Caco-2 (cell line): ENCODE measurements at regions of chr12 and their contacts with region 1.

Region 1: DNA sequence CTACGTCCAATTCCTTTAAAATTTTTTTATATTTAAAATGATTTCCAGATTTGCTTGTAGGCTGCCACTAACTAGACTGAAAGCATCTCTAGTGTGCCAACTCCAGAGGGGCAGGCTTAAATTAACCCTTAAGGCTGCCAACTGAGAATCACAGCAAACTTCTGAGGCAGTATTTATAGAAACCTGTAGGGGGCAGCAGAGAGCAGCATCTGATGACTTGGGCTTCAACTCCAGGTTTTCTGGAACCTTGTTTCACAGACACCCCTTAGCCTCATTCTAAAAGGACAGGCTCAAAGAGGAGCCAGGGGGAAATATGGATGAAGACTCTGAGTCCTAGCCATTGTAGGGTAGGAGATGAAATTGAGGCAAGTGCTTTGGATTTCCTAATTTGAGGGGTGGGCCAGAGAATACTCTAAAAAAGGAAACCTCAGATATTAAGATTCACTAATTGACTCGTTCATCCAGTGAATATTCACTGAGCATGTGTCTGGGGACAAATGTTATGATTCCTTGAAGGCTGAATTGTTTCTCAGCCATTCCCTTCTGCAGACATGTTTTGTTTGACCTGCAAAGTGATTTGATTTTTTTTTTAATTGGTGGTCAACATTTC is 63.3 kb upstream of the HSPB8 start:
- DNase-seq: peak in 1 of 2 experiments; percentile 67
- H3K4me3 ChIP-seq: no peak overlapping the region
- H3K4me3 Mint-ChIP-seq: no peak overlapping the region
- H3K27ac Mint-ChIP-seq: no peak overlapping the region
- H3K4me1 ChIP-seq: no peaks in the 10 kb centered on the region
- H3K4me1 Mint-ChIP-seq: no peaks in the 10 kb centered on the region
- H3K27me3 ChIP-seq: no peaks in the 10 kb centered on the region
- H3K27me3 Mint-ChIP-seq: peaks cover 7% of the 10 kb centered on the region
- CTCF ChIP-seq: peak; percentile 74 to 86

Region 2: DNA sequence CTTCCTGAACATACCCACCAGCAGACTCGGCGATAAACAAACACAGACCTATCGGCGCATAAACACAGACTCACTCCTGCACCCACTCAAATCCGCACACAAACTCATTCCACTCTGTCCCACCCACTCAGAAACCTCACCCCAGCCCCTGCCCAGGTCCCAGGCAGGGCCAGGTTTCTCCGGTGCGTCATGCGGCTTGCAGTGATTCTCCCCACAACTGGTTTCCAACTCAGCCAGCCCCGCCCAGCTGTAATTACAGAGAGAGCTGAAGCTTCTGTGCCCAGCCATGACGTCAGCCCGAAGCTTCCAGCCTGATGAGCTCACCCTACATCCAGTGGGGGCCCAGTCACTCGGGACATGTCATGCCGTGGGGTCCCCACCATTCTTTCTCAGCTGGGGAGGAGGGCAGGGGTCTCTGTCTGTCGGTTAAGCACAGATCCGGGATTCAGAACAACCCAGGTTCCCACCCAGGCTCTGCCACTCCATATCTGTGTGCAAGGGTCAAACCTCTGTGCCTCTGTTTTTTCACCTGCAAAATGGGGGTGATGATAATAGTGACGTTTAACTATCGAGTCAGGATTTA is 61.0 kb after region 1 on chr12:
- CTCF ChIA-PET with region 1: no interaction called
- POLR2A ChIA-PET with region 1: no interaction called
- intact Hi-C with region 1: loop called (anchors 5 kb)
- DNase-seq: peak; percentile 41 to 74
- H3K4me3 ChIP-seq: no peak overlapping the region
- H3K4me3 Mint-ChIP-seq: peak overlapping the region; percentile 46
- H3K27ac Mint-ChIP-seq: no peak overlapping the region
- H3K4me1 ChIP-seq: peaks cover 54% of the 10 kb centered on the region
- H3K4me1 Mint-ChIP-seq: peaks cover 41% of the 10 kb centered on the region
- H3K27me3 ChIP-seq: no peaks in the 10 kb centered on the region
- H3K27me3 Mint-ChIP-seq: no peaks in the 10 kb centered on the region
- CTCF ChIP-seq: no peak

Region 3: DNA sequence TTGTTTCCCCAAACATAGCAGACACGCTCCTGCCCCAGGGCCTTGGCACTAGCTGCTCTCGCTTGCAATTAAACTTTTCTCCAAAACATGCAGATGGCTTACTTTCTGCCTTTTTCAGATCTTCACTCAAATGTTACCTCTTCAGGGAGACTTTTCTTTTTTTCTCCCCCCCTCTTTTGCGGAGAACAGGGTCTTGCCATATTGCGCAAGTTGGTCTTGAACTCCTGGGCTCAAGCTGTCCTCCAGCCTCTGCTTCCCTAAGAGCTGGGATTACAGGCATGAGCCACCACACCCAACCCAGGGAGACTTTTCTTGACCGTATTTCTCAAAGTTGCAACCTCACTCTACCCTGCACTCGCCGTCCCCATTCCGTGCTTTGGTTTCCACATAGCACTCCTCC is 137.8 kb after region 1 on chr12:
- CTCF ChIA-PET with region 1: interaction called, 10 read pairs
- POLR2A ChIA-PET with region 1: no interaction called
- intact Hi-C with region 1: no loop called
- DNase-seq: no peak
- H3K4me3 ChIP-seq: no peak overlapping the region
- H3K4me3 Mint-ChIP-seq: no peak overlapping the region
- H3K27ac Mint-ChIP-seq: no peak overlapping the region
- H3K4me1 ChIP-seq: no peaks in the 10 kb centered on the region
- H3K4me1 Mint-ChIP-seq: no peaks in the 10 kb centered on the region
- H3K27me3 ChIP-seq: no peaks in the 10 kb centered on the region
- H3K27me3 Mint-ChIP-seq: no peaks in the 10 kb centered on the region
- CTCF ChIP-seq: no peak

Region 4: DNA sequence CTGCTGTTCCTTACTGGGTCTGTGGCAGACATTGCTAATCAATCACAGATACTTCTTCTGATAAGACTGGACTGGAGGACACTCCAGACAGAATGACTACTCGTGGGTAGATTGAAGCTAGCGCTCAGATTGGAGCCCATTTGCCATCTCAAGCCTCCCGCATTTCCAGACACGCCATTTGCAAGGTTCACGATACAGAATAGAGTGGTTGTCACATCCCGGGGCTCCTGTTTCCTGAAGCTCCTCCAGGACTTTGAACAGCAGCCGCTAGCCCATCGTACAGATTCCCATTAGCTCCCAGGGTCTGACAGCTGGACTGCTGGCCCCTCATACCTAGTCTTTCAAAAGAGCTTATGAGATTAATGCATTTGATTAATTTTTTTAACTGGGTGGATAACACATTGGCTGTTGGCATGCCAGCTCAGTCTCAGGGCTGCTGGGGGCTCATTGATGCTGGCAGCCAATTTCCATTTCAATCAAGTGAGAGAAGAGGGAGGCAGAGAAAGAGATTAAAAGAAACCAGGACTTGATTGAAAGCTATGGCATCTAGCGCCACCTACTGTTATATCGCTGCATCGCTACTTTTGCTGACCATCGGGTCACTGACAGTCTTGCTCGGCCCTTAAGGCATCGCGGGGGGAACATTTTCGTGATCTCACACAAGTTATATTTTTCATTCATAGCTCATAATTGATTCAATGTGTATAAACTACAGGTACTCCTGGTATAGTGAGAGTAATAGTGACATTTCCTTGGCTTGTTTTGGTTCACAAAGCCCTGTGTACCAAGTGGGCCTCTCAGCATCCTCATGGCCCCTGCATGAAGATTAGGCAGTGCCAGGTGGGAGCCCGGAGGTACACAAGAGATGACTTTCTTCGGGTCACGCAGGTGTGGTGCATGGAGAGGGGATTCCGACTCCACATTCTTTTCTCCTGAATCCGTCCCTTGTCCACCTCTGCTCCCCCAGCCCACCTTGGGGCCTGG is 297.7 kb after region 1 on chr12:
- CTCF ChIA-PET with region 1: no interaction called
- POLR2A ChIA-PET with region 1: no interaction called
- intact Hi-C with region 1: loop called (anchors 1 kb)
- DNase-seq: peak; percentile 63 to 69
- H3K4me3 ChIP-seq: no peak overlapping the region
- H3K4me3 Mint-ChIP-seq: no peak overlapping the region
- H3K27ac Mint-ChIP-seq: no peak overlapping the region
- H3K4me1 ChIP-seq: peaks cover 9% of the 10 kb centered on the region; the same call in 1 of the 2 replicates
- H3K4me1 Mint-ChIP-seq: peaks cover 16% of the 10 kb centered on the region
- H3K27me3 ChIP-seq: no peaks in the 10 kb centered on the region
- H3K27me3 Mint-ChIP-seq: no peaks in the 10 kb centered on the region
- CTCF ChIP-seq: peak; percentile 72 to 79

Region 5: DNA sequence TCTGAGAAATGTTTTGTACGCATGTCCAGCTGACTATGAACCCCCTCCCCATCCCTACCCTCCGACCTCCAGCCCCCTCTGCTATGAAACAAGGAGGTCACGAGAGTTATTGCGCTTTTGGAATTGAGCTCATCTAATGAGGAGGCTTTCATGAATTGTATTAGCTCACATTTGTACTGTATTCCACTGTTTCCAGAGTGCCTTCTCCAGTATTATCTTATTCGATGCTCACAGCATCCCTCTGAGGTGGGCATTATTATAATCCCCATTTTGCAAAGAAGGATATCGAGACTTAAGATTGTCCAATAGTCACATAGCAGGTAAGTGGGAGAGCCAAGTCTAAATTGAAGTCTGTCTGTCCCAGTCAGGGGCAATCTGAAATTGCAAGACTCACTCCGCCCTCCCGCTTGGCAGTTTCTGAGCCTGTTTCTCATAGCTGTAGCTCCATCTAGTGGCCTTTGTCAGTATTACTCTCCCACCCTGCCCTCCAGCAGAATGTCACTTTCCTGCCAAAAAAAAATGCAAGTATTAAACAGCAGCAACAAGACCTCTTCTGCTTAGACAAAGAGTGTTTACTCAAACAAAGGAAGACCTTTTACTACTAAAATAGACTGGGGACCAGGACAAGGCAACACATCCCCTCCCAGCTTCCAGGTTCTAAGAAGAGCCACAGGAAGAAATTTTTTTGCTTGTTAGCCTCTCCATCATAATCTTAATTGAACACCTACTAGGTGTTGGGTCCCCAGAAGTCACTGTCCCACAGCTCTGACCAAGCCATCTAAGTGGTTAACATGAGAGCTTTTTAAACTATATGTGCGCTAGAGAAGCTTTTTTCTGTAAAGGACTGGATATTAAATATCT is 429.6 kb after region 1 on chr12:
- CTCF ChIA-PET with region 1: no interaction called
- POLR2A ChIA-PET with region 1: no interaction called
- intact Hi-C with region 1: loop called (anchors 1 kb)
- DNase-seq: peak; percentile 47 to 73
- H3K4me3 ChIP-seq: no peak overlapping the region
- H3K4me3 Mint-ChIP-seq: no peak overlapping the region
- H3K27ac Mint-ChIP-seq: no peak overlapping the region
- H3K4me1 ChIP-seq: no peaks in the 10 kb centered on the region
- H3K4me1 Mint-ChIP-seq: no peaks in the 10 kb centered on the region
- H3K27me3 ChIP-seq: no peaks in the 10 kb centered on the region
- H3K27me3 Mint-ChIP-seq: peaks cover 21% of the 10 kb centered on the region
- CTCF ChIP-seq: peak; percentile 74 to 91